Head of caudate nucleus (tissue), 42 donors: ENCODE measurements at regions of chr16 and their contacts with region 1.

Region 1: DNA sequence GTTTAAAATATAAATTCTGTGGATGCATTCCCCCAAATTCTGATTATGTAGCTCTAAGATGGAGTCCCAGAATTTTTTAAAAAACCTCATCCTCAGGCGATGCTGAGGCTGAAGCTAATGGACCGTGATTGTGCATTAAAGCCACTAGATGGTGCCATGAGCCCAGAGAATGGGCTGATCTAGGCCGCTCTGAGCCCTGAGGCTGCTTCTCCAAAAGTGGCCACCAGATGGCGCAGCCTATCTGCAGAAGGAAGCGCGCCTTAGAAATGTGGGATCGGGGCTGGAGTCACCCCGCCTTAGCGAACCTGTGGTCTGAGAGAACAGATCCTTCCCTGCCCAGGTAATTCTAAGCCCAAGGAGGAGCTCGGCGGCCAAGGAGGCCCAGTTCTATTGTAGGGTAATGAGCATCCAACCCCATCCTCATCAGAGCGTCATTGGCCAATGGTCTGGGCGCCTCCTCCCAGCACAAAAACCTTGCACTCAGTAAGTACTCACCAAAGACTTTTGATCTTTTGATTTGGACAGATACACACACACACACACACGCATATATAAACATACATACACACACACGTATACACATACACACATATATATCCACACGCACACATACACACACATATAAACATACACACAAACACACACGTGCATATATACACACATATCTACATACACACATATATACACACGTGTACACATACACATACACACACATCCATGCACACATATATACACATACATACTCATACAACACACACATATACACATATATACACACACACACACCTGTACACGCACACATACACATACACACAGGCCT is 13.7 kb upstream of the MMP2 start:
- DNase-seq: peak; percentile 65 to 98 (median 92)

Region 2: DNA sequence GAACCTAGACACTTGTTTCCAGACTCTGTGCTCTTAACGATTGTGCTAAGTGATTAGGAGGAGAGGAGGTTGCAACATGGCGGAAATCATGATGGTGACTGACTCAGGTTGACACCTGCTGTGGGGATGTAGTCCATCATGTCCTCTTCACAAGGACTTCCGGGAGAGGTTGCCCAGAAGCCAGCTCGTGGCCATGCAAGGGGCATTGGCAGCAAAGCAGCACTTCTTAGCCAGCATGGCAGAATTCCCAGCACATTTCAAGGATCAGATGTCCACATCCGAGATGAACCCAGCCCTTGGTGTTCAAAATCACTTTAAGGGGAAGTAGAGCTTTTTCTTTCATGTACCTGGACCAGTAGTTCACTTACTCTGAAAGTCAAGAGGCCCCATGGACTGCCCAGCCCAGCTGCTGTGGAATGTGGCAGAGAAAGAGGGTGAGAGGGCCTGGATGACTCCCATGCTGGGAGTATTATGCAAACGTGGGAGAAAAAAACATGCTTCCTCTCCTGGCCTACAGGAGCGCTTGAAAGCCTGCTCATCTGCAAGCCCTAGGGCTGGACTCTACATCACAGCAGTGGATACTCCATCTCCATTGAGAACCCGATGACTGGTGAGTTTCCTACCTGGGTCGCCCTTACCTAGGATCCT is 75.7 kb before region 1 on chr16:
- intact Hi-C with region 1: no loop called
- DNase-seq: peak in 14 of 42 donors; percentile 10 to 52 (median 26)

Region 3: GRCh38 chr16:55444754-55445485 is 20.4 kb before region 1 on chr16:
- intact Hi-C with region 1: no loop called
- DNase-seq: peak in 29 of 42 donors; percentile 5 to 66 (median 32)

Region 4: DNA sequence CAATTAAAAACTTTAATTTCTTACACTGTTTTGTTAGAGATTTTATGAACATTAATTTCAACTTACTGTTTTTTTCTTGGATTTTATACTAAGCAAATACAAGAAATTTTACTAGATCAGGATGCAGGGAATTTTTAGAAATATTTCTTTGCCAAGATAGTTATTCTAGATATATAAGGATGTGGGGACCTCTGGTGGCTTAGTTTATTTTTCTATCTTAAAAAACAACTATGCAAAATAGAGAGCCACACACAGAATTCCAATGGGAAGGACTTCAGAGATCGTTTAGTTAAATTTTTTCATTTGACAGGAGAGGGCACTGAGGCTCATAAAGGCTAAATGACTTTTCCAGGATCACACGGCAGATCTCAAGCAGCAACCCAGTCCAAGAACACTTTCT is 78.2 kb after region 1 on chr16:
- intact Hi-C with region 1: loop called (anchors 5 kb)
- DNase-seq: peak in 1 of 42 donors; percentile 16

Region 5: GRCh38 chr16:55701442-55702319 is 236.4 kb after region 1 on chr16:
- intact Hi-C with region 1: loop called (anchors 2 kb)
- DNase-seq: peak in 35 of 42 donors; percentile 8 to 74 (median 39)

Region 6: DNA sequence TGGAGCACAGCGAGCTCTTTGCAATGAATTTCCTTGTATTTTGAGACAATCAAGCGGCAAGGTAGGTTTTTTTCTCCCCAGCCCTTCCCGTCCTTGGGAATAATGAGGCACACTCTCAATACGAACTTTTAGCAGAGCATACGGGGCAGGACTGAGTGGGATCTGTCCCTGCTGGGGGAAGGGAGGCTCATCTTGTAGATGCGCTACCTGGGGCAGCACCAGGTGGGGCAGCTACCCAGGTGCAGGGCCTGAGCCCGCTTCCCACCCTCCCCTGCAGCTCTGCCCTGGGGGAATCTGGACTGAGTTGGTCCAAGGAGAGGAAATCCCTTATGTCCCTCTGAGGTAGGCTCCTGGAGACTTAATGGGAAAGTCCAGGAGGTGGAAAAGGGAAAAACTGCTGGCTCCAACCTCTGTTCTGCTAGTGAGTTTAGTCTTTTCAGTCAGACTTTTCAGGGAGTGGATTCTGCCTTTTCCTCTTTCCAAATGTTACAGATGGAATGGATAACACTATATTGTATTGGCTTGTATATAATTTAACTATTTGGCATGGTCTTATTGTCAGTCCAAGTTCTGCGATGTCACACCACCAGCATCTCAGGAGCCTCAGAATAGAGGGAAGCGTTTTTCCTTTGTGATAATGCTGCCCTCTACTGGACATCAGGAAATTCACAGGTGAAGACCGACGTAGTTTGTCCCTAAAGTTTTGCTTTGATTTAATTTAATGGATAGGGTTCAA is 377.2 kb after region 1 on chr16:
- intact Hi-C with region 1: loop called (anchors 10 kb)
- DNase-seq: peak in 27 of 42 donors; percentile 17 to 81 (median 52)